Naive thymus-derived CD8-positive, alpha-beta T cell (primary cell): ENCODE measurements at regions of chr5 and their contacts with region 1.

Region 1: DNA sequence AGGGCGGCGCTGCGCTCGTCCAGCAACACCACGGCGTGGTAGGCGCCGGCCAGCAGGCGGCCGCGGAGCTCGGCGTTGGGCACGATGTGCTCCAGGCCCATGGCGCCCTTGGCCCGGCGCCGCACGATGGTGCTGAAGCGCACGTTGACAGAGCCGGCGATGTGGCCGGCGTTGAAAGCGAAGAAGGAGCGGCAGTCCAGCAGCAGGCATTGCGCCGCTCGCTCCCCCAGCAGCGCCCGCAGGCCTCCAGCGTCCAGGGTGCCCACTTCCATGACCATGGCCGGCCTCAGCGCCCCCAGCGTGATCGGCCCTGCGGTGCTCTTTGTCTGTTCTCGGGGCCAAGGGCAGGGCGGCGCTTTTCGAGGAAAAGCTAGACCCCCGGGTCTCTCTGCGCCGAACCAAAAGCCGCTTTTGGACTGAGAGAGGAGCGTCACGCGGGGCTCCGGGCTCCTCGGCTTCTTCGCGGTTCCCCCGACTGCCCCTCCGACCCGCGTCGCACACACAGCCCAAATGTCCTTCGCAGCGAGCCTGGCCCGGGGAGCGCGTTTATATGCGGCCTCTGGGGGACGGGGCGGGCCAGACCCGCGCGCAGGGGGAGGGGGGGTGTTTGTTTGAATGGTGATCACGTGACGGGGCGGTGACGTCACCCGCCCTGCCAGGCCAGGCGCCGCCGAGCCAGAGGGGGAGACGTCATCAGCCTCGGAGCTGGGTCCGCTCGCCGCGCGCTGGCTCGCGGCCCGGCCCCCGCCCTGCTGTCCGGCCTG is at the start of gene DUSP1:
- DNase-seq: peak; percentile 95 to 99 (median 97)
- ATAC-seq: peak; percentile 44 to 52
- H3K4me3 Mint-ChIP-seq: peak within 1 kb of the TSS; percentile 89 to 97 (median 94)
- H3K27ac Mint-ChIP-seq: peak within 1 kb of the TSS; percentile 94 to 100 (median 100)
- H3K4me1 Mint-ChIP-seq: peaks cover 36 to 79% (median 66%) of the 10 kb centered on the region in 4 donors
- H3K27me3 Mint-ChIP-seq: peaks cover 0 to 4% (median 0%) of the 10 kb centered on the region in 5 donors
- polyA plus RNA-seq, gene DUSP1: 102 to 660 (median 258) TPM

Region 2: DNA sequence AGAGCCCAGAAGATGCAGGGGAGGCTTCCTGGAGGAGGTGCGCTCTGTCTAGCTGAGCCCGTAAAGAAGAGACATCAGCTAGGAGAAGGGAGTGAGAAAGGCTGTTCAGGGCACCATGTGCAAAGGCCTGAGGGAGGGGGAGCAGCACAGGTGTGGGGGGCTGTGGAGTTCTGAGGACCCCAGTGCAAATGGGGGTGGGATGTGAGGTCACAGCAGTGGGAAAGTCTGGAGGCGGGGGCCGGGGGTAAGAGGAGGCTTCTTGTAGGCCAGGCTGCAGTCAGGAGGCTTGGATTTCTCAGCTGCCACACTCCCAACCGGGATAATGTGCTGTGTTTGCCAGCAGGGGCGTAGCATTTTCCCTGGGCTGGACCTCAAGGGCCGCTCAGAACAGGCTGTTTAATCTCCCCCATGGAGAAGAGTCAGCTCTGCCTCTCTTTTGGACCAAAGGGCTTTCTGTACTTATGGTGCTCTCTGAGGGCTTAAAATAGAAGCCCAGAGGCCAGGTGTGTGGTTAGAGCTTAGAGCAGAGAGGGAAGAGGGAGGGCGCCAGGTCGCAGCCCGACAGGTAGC is 124.1 kb before region 1 on chr5:
- POLR2A ChIA-PET with region 1: no interaction called
- DNase-seq: no peak
- ATAC-seq: no peak
- H3K4me3 Mint-ChIP-seq: no peak overlapping the region
- H3K27ac Mint-ChIP-seq: peak overlapping the region in 1 of 10 donors; percentile 33
- H3K4me1 Mint-ChIP-seq: peaks cover 0 to 4% (median 0%) of the 10 kb centered on the region in 4 donors
- H3K27me3 Mint-ChIP-seq: peaks cover 11 to 28% (median 17%) of the 10 kb centered on the region in 5 donors

Region 3: GRCh38 chr5:172714491-172715421 is 56.1 kb before region 1 on chr5:
- POLR2A ChIA-PET with region 1: interaction called, 56 read pairs
- DNase-seq: peak; percentile 42 to 81 (median 59)
- ATAC-seq: peak; percentile 73 to 74
- H3K4me3 Mint-ChIP-seq: no peak overlapping the region
- H3K27ac Mint-ChIP-seq: peak overlapping the region in 6 of 10 donors; percentile 4 to 89 (median 64)
- H3K4me1 Mint-ChIP-seq: peaks cover 4 to 12% (median 7%) of the 10 kb centered on the region in 4 donors
- H3K27me3 Mint-ChIP-seq: peaks cover 7 to 16% (median 14%) of the 10 kb centered on the region in 5 donors

Region 4: DNA sequence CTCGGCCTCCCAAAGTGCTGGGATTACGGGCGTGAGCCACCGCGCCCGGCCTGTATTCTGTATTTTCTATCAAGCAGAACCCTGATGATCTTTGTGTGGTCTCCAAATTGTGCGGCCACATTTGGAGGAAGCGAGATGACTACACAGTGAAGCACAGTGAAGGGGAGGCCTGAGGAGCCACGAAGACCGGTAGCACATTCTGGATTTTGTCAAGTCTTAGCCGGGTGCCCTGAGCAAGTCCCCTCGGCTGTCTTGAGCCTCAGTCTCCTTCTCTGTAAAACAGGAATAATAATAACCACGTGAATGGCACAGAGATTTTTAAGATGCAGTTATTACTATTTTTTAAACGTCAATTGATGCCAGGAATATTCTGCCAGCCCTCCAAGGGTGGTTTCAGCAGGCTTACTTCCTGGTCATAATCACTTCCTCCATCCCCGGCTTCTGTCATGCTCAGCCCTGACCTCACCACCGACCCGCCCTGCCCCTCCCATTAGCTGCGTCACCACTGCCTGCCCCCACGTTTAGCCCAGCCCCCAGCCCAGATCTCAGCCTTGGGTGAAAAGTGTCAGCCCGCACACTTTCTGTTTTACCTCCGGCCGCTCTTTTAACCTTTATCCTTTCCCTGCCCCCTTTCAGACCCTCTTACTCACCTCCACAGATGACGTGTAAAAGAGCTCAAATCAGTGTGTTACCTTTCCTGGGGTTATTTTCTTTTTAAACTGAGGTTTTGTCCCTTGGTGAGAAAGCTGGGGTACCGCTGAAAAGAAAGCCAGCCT is 36.2 kb after region 1 on chr5:
- POLR2A ChIA-PET with region 1: interaction called, 15 read pairs
- DNase-seq: peak; percentile 49 to 90 (median 68)
- ATAC-seq: peak; percentile 95 to 97
- H3K4me3 Mint-ChIP-seq: peak overlapping the region; percentile 78 to 91 (median 84)
- H3K27ac Mint-ChIP-seq: peak overlapping the region; percentile 91 to 97 (median 94)
- H3K4me1 Mint-ChIP-seq: peaks cover 10 to 21% (median 16%) of the 10 kb centered on the region in 4 donors
- H3K27me3 Mint-ChIP-seq: no peaks in the 10 kb centered on the region

Region 5: DNA sequence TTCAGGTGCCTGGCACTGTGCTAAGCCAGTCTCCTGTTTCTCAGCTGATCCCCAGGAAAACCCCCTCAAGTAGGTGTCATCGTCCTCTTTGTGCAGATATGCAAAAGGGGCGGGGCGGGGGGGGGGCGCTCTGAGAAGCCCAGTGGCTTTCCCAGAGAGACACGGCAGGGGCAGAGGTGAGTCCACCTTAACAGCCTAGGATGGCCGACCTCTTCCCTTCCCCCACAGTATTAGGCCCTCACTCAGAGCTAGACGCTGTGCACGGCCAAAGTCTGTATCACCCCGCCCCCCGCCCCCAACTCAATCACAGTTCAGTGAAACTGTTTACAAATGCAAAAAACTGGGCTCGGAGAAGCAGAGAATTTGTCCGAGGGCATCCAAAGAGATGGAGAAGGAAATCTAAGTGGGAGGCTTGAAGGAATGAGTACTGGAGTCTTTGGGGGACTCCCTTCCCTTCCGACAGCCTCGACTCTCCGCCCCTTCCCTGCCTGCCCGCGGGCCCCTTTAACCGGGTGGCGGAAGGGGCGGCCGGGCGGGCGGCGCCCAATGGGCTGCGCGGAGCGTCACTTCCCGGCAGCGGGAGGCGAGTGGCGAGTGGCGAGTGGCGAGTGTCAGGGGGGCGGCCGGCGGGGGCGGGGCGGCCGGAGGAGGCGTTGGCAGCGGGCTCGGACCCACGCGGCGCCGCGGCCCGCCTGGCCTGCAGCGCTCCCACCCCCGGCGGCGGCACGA is 63.0 kb after region 1 on chr5 and contains the start of gene ERGIC1:
- POLR2A ChIA-PET with region 1: interaction called, 110 read pairs
- DNase-seq: peak; percentile 50 to 83 (median 68)
- ATAC-seq: peak; percentile 69 to 84
- H3K4me3 Mint-ChIP-seq: peak within 1 kb of the TSS; percentile 81 to 94 (median 85)
- H3K27ac Mint-ChIP-seq: peak within 1 kb of the TSS; percentile 90 to 98 (median 96)
- H3K4me1 Mint-ChIP-seq: peaks cover 18 to 50% (median 41%) of the 10 kb centered on the region in 4 donors
- H3K27me3 Mint-ChIP-seq: no peaks in the 10 kb centered on the region
- polyA plus RNA-seq, gene ERGIC1: 18.4 to 23.8 (median 21.5) TPM

Region 6: GRCh38 chr5:172920447-172920849 is 149.6 kb after region 1 on chr5:
- POLR2A ChIA-PET with region 1: interaction called, 14 read pairs
- DNase-seq: no peak
- ATAC-seq: no peak
- H3K4me3 Mint-ChIP-seq: peak overlapping the region in 1 of 10 donors; percentile 33
- H3K27ac Mint-ChIP-seq: peak overlapping the region in 8 of 10 donors; percentile 58 to 100 (median 93)
- H3K4me1 Mint-ChIP-seq: peaks cover 15 to 35% (median 32%) of the 10 kb centered on the region in 4 donors
- H3K27me3 Mint-ChIP-seq: no peaks in the 10 kb centered on the region

Region 7: GRCh38 chr5:172932313-172933017 is 161.6 kb after region 1 on chr5:
- POLR2A ChIA-PET with region 1: interaction called, 18 read pairs
- DNase-seq: peak; percentile 51 to 86 (median 74)
- ATAC-seq: peak; percentile 98
- H3K4me3 Mint-ChIP-seq: no peak overlapping the region
- H3K27ac Mint-ChIP-seq: peak overlapping the region in 9 of 10 donors; percentile 15 to 94 (median 83)
- H3K4me1 Mint-ChIP-seq: peaks cover 6 to 9% (median 6%) of the 10 kb centered on the region in 4 donors
- H3K27me3 Mint-ChIP-seq: no peaks in the 10 kb centered on the region

Region 8: GRCh38 chr5:172958331-172959046 is 187.6 kb after region 1 on chr5:
- POLR2A ChIA-PET with region 1: interaction called, 10 read pairs
- DNase-seq: peak in 9 of 10 donors; percentile 36 to 76 (median 47)
- ATAC-seq: peak; percentile 63 to 64
- H3K4me3 Mint-ChIP-seq: peak overlapping the region; percentile 92 to 98 (median 96)
- H3K27ac Mint-ChIP-seq: peak overlapping the region; percentile 96 to 99 (median 98)
- H3K4me1 Mint-ChIP-seq: peaks cover 29 to 56% (median 37%) of the 10 kb centered on the region in 4 donors
- H3K27me3 Mint-ChIP-seq: no peaks in the 10 kb centered on the region

Region 9: DNA sequence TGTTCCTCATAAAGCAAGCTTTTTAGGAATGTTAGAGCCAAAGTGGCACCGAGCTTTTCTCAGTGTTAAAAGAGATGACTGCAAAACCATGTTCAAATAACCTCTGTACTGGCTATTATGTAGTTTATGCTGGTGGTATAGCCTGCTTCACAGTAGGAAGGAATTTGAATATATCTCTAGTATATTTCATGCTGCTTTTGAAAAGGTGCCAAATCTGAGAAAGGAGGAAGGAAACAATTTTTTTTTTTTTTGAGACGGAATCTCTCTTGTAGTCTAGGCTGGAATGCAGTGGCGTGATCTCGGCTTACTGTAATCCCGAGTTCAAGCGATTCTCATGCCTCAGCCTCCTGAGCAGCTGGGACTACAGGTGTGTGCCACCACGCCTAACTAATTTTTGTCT is 298.8 kb after region 1 on chr5:
- POLR2A ChIA-PET with region 1: no interaction called
- DNase-seq: no peak
- ATAC-seq: peak in 1 of 2 donors; percentile 29
- H3K4me3 Mint-ChIP-seq: peak overlapping the region; percentile 29 to 60 (median 40)
- H3K27ac Mint-ChIP-seq: peak overlapping the region in 4 of 10 donors; percentile 15 to 65 (median 40)
- H3K4me1 Mint-ChIP-seq: peaks cover 28 to 87% (median 75%) of the 10 kb centered on the region in 4 donors
- H3K27me3 Mint-ChIP-seq: no peaks in the 10 kb centered on the region